GM13977 (cell line): ENCODE measurements at regions of chr10 and their contacts with region 1.

Region 1: GRCh38 chr10:120336911-120337540 is 120.0 kb upstream of the PLPP4 start:
- DNase-seq: peak; percentile 23
- CTCF ChIP-seq: peak; percentile 76

Region 2: DNA sequence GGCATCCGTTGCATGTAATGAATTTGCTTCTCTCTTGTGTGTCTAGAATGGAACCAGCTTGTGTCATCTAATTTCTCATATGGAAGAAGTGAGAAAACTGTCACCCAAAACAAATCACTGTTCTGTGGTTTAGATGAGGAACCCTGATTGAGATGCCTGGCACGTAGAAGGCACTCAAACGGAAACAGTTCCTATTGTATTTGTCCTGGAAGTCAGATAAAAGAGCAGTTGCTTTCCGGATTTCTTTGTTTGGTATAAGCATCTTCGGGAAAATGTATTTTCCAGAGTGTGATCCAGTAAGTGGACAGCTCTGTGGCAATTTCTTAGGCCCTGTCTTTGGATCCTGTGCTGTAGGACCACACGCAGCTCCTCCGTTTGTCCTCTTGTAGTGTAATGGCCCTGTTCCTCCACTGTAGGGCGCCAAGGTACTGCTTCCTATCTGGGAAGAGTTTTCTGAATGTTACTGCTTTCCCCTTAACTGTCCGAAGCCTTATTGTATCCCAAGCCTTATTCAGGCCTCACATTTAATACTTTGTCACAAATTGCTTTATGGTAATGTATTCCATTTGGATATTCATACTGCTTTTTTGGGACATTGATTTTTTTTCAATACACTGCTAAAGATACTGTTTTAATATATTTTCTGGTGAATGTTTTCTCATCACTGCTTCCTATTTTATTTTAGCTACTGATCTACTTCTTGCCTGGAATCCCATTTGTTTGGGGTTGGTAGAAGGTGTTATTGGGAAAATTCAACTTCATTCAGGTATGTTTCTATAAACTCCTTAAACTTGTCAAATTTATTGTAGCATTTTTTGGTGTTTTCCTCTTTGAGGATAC is 586.4 kb before region 1 on chr10:
- in situ Hi-C with region 1: loop called (anchors 25 kb)
- DNase-seq: peak; percentile 57
- CTCF ChIP-seq: peak; percentile 90